Tibial artery (tissue), 4 donors: ENCODE measurements at regions of chr1 and their contacts with region 1.

Region 1: GRCh38 chr1:159071970-159072582 is 4.5 kb downstream of the AIM2 start:
- DNase-seq: no peak
- H3K4me3 ChIP-seq: no peak overlapping the region
- H3K27ac ChIP-seq: no peak overlapping the region
- H3K4me1 ChIP-seq: no peaks in the 10 kb centered on the region
- H3K27me3 ChIP-seq: no peaks in the 10 kb centered on the region
- CTCF ChIP-seq: peak; percentile 69 to 73

Region 2: DNA sequence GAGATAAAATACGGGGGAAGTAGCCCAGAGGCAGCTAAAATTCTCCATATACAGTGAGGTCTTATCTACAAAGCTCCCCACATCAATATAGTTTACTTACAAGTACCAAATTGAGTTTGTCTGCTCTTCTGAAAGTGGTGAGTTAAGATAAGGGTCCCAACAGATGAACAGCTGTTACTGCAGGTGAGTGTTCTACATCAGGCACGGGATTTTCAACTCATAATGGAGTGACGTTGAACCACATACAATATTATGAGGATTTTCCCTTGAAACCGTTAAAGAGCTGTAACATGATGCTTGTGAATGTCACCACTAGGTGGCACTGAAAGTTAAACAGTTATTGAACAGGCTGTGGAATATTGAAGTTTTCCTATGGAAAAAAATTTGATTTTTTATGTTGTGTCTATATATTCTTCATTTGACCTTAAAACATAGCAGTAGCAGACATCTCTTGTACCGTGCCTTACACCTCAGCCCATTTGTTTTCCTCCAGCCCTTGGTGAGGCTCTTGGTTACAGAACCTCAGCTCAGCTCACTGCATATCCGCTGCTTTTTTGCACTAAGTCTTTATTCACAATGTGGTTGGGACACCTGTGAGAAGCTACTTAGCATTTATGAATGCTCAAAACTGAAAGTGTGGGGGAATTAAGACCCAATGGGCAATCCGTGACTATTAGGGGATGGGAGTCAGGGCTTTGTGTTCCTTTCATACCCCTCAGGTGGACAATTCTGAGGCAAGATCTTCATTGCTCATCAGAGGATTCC is 868.2 kb before region 1 on chr1:
- intact Hi-C with region 1: loop called (anchors 5 kb)
- DNase-seq: no peak
- H3K4me3 ChIP-seq: no peak overlapping the region
- H3K27ac ChIP-seq: no peak overlapping the region
- H3K4me1 ChIP-seq: no peaks in the 10 kb centered on the region
- H3K27me3 ChIP-seq: no peaks in the 10 kb centered on the region
- CTCF ChIP-seq: peak; percentile 73 to 76

Region 3: DNA sequence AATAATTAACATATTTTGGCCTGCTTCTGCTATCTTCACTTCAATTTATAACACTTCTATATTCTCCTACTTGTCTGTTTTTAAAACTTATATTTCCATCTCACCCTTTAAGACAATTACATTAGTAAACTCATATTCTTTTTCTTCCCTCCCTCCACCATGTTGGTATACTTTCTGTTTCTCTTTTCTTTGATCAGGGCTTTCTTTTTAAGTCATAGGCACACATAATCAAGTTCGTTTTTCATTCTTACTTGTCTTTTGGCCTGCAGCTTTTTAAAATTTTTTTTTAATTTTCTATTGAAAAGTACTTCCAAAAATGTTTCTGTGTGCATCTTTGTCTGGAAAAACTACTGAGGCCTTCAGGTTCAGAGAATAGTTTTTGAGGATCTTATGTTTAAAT is 138.5 kb before region 1 on chr1:
- intact Hi-C with region 1: no loop called
- DNase-seq: no peak
- H3K4me3 ChIP-seq: no peak overlapping the region
- H3K27ac ChIP-seq: no peak overlapping the region
- H3K4me1 ChIP-seq: no peaks in the 10 kb centered on the region
- H3K27me3 ChIP-seq: no peaks in the 10 kb centered on the region
- CTCF ChIP-seq: no peak